ENCODE measurements at regions of chr1 and their contacts with region 1.

Region 1: DNA sequence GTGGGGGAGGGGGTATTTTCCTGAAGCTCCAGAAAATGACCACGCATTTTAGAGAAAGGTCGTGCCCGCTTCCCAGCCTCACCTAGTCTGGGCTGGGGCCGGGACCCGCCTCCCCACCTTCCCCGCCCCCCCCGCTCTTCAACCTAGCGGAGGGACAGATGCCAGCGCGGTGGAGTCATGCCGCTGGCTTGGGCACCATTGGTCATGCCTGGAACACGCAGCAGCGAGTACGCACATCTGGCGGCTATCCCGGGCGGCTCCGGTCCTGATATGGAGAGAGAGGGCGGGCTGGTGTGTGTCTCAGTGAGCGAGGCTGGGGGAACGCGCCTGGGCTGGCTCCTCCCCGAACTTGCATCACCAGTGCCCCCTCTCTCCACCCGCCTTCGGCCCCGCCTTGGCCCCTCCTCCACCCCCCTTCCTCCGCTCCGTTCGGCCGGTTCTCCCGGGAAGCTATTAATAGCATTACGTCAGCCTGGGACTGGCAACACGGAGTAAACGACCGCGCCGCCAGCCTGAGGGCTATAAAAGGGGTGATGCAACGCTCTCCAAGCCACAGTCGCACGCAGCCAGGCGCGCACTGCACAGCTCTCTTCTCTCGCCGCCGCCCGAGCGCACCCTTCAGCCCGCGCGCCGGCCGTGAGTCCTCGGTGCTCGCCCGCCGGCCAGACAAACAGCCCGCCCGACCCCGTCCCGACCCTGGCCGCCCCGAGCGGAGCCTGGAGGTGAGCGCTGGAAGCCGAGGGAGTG is at the start of gene ATF3:
- DNase-seq: peak; percentile 98
- ATAC-seq: peak; percentile 87
- H3K4me3 ChIP-seq: peak within 1 kb of the TSS; percentile 70 to 77
- H3K27ac ChIP-seq: peak within 1 kb of the TSS; percentile 71
- H3K4me1 ChIP-seq: peaks cover 11 to 48% of the 10 kb centered on the region in 2 experiments; a peak in 3 of 4 replicates
- H3K27me3 ChIP-seq: peaks cover 21% of the 10 kb centered on the region; the same call in 1 of the 2 replicates
- CTCF ChIP-seq: no peak
- POLR2A ChIP-seq: peak; percentile 99
- RAD21 ChIP-seq: no peak; the same call in 1 of the 2 replicates
- total RNA-seq, gene ATF3: 43.2 TPM

Region 2: GRCh38 chr1:212555426-212555825 is 53.0 kb before region 1 on chr1:
- CTCF ChIA-PET with region 1: no interaction called
- POLR2A ChIA-PET with region 1: interaction called, 10 read pairs
- RAD21 ChIA-PET with region 1: no interaction called
- intact Hi-C with region 1: no loop called
- DNase-seq: no peak
- ATAC-seq: no peak
- H3K4me3 ChIP-seq: no peak overlapping the region
- H3K27ac ChIP-seq: no peak overlapping the region
- H3K4me1 ChIP-seq: peaks cover 5 to 25% of the 10 kb centered on the region in 2 experiments
- H3K27me3 ChIP-seq: no peaks in the 10 kb centered on the region
- CTCF ChIP-seq: no peak
- POLR2A ChIP-seq: no peak
- RAD21 ChIP-seq: no peak

Region 3: GRCh38 chr1:212566522-212567479 is 41.6 kb before region 1 on chr1:
- CTCF ChIA-PET with region 1: no interaction called
- POLR2A ChIA-PET with region 1: interaction called, 11 read pairs
- RAD21 ChIA-PET with region 1: no interaction called
- intact Hi-C with region 1: loop called (anchors 2 kb)
- DNase-seq: peak; percentile 45
- ATAC-seq: peak; percentile 90
- H3K4me3 ChIP-seq: peak overlapping the region; percentile 34 to 45
- H3K27ac ChIP-seq: peak overlapping the region; percentile 49
- H3K4me1 ChIP-seq: peaks cover 19 to 41% of the 10 kb centered on the region in 2 experiments
- H3K27me3 ChIP-seq: no peaks in the 10 kb centered on the region
- CTCF ChIP-seq: no peak
- POLR2A ChIP-seq: no peak
- RAD21 ChIP-seq: peak; percentile 19; the same call in 1 of the 2 replicates

Region 4: DNA sequence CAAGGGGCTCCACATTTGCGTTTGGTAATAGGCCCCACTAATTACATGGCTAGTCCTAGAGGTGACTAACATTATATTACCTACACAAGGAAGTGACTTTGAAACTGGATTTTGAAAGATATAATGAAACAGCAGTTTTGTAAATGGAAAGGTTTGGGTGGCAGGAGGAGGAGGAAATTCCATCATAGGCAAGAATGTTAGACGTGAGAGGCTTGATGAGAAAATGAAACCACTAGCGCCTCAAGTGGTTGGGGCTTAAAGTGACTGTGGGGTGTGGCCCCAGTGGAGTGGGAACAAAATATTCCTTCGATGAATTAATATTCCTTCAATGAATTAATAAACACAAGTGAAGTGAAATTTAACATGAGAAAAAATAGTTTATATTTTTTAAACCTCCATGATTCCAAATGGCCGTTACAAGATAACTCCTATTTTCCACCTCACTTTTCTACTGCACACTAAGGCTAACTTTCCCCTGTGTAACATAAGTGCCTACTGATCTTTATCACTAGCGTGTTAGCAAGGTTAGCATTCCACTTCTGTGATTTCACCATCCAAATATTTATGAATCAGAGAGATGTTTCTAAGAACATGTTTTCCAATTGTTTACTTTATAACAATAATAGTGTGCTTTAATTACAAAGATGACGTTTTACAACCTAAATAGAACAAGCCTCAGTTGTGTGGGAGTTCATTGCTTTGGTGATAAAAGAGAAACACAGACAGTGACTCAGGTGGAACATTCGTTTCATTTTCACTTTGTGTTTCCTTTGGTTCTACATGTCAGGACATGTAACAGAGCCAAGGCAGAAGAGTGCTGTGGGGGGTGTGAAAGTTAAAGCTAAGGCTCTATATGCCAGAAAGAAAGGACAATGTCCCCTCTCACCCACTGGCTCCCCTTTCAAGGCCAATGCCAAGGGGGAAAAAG is 12.3 kb before region 1 on chr1:
- CTCF ChIA-PET with region 1: interaction called, 7 read pairs
- POLR2A ChIA-PET with region 1: interaction called, 45 read pairs
- RAD21 ChIA-PET with region 1: interaction called in 1 of 2 experiments, 4 read pairs
- intact Hi-C with region 1: no loop called
- DNase-seq: peak; percentile 68
- ATAC-seq: peak; percentile 82
- H3K4me3 ChIP-seq: peak overlapping the region in 1 of 2 experiments; percentile 36; a peak in 3 of 4 replicates
- H3K27ac ChIP-seq: peak overlapping the region; percentile 72
- H3K4me1 ChIP-seq: peaks cover 18 to 44% of the 10 kb centered on the region in 2 experiments
- H3K27me3 ChIP-seq: no peaks in the 10 kb centered on the region
- CTCF ChIP-seq: peak; percentile 50 to 86 (median 84); a peak in 5 of 6 replicates
- POLR2A ChIP-seq: no peak
- RAD21 ChIP-seq: peak; percentile 67

Region 5: DNA sequence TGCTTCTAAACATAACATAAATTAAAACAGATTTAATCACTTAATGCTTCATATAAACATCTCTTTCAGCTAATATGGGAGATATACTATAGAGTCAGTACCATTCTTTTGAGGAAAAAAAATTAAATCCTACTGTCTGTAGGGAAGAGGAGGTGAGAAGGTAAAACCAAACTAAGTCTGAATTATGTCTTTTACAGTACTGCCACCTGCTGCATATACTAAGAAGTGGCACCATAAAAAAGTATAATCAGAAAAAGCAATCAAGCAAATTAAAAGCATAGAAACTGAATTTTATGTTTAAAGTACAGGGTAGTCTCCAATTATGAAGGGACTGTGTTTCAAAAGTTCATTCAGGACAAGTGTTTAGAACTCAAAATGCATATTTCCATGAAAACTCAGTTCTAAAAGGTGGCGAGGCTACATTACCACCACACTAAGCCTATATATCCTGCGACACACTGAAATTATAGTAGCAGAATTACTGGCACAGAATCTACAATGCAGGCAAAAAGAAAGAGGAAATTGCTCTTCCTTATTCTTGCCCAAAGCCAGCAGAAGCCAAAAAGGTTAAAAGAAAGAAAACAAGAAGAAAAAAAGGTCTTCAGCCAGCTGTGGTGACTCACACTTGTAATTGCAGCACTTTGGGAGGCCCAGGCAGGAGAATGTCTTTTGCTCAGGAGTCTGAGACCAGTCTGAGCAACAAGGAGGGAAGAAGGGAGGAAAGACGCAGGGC is 174.2 kb after region 1 on chr1:
- CTCF ChIA-PET with region 1: no interaction called
- POLR2A ChIA-PET with region 1: no interaction called
- RAD21 ChIA-PET with region 1: no interaction called
- intact Hi-C with region 1: loop called (anchors 5 kb)
- DNase-seq: no peak
- ATAC-seq: peak; percentile 68; the same call in 1 of the 2 replicates
- H3K4me3 ChIP-seq: no peak overlapping the region
- H3K27ac ChIP-seq: no peak overlapping the region
- H3K4me1 ChIP-seq: no peaks in the 10 kb centered on the region
- H3K27me3 ChIP-seq: no peaks in the 10 kb centered on the region
- CTCF ChIP-seq: peak; percentile 50 to 70 (median 64); a peak in 5 of 6 replicates
- POLR2A ChIP-seq: no peak
- RAD21 ChIP-seq: peak; percentile 75

Measured in HCT116 (cell line).